CD8-positive, alpha-beta memory T cell (primary cell): ENCODE measurements at regions of chr3 and their contacts with region 1.

Region 1: GRCh38 chr3:9890249-9891071 is at the start of gene JAGN1:
- DNase-seq: peak; percentile 85 to 94 (median 86)
- H3K4me3 ChIP-seq: peak within 1 kb of the TSS; percentile 97
- H3K4me3 Mint-ChIP-seq: peak within 1 kb of the TSS; percentile 97 to 100 (median 98)
- H3K27ac ChIP-seq: peak within 1 kb of the TSS; percentile 100
- H3K27ac Mint-ChIP-seq: peak within 1 kb of the TSS; percentile 99 to 100 (median 100)
- H3K4me1 ChIP-seq: peaks cover 13% of the 10 kb centered on the region
- H3K4me1 Mint-ChIP-seq: peaks cover 31 to 45% (median 40%) of the 10 kb centered on the region in 3 donors
- H3K27me3 ChIP-seq: no peaks in the 10 kb centered on the region
- H3K27me3 Mint-ChIP-seq: no peaks in the 10 kb centered on the region
- total RNA-seq, gene JAGN1: 55.5 to 59.0 TPM

Region 2: GRCh38 chr3:9809615-9810432 is 80.6 kb before region 1 on chr3 and contains the start of gene TTLL3:
- CTCF ChIA-PET with region 1: no interaction called
- POLR2A ChIA-PET with region 1: interaction called, 11 read pairs
- DNase-seq: peak; percentile 29 to 66 (median 40)
- H3K4me3 ChIP-seq: peak within 1 kb of the TSS; percentile 63
- H3K4me3 Mint-ChIP-seq: peak within 1 kb of the TSS; percentile 87 to 98 (median 92)
- H3K27ac ChIP-seq: peak within 1 kb of the TSS; percentile 71
- H3K27ac Mint-ChIP-seq: peak within 1 kb of the TSS; percentile 90 to 100 (median 98)
- H3K4me1 ChIP-seq: peaks cover 28% of the 10 kb centered on the region
- H3K4me1 Mint-ChIP-seq: peaks cover 36 to 46% (median 46%) of the 10 kb centered on the region in 3 donors
- H3K27me3 ChIP-seq: no peaks in the 10 kb centered on the region
- H3K27me3 Mint-ChIP-seq: no peaks in the 10 kb centered on the region
- total RNA-seq, gene TTLL3: 18.8 to 19.1 TPM

Region 3: DNA sequence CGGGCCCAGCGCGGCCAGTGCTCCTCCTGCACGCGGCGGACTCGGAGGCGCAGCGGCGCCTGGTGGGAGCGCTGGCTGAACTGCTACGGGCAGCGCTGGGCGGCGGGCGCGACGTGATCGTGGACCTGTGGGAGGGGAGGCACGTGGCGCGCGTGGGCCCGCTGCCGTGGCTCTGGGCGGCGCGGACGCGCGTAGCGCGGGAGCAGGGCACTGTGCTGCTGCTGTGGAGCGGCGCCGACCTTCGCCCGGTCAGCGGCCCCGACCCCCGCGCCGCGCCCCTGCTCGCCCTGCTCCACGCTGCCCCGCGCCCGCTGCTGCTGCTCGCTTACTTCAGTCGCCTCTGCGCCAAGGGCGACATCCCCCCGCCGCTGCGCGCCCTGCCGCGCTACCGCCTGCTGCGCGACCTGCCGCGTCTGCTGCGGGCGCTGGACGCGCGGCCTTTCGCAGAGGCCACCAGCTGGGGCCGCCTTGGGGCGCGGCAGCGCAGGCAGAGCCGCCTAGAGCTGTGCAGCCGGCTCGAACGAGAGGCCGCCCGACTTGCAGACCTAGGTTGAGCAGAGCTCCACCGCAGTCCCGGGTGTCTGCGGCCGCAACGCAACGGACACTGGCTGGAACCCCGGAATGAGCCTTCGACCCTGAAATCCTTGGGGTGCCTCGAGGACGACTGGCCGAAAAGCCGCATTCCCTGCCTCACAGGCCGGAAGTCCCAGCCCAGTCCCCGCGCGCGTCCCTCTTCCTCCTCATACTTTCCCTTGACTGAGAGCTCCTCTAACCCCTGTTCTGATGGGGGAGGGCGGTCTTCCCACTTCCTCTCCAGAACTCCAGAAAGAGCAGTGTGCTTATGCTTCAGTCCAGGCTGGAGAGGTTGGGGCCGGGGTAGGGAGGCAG is 25.0 kb after region 1 on chr3:
- CTCF ChIA-PET with region 1: interaction called, 10 read pairs
- POLR2A ChIA-PET with region 1: interaction called, 4 read pairs
- DNase-seq: peak in 2 of 5 donors; percentile 12 to 52
- H3K4me3 ChIP-seq: peak overlapping the region; percentile 49
- H3K4me3 Mint-ChIP-seq: peak overlapping the region; percentile 74 to 93 (median 77)
- H3K27ac ChIP-seq: no peak overlapping the region
- H3K27ac Mint-ChIP-seq: peak overlapping the region in 2 of 8 donors; percentile 17 to 88
- H3K4me1 ChIP-seq: peaks cover 9% of the 10 kb centered on the region
- H3K4me1 Mint-ChIP-seq: peaks cover 7 to 21% (median 15%) of the 10 kb centered on the region in 3 donors
- H3K27me3 ChIP-seq: no peaks in the 10 kb centered on the region
- H3K27me3 Mint-ChIP-seq: peaks cover 7 to 16% of the 10 kb centered on the region in 2 donors